ENCODE measurements at regions of chr2 and their contacts with region 1.

Region 1: DNA sequence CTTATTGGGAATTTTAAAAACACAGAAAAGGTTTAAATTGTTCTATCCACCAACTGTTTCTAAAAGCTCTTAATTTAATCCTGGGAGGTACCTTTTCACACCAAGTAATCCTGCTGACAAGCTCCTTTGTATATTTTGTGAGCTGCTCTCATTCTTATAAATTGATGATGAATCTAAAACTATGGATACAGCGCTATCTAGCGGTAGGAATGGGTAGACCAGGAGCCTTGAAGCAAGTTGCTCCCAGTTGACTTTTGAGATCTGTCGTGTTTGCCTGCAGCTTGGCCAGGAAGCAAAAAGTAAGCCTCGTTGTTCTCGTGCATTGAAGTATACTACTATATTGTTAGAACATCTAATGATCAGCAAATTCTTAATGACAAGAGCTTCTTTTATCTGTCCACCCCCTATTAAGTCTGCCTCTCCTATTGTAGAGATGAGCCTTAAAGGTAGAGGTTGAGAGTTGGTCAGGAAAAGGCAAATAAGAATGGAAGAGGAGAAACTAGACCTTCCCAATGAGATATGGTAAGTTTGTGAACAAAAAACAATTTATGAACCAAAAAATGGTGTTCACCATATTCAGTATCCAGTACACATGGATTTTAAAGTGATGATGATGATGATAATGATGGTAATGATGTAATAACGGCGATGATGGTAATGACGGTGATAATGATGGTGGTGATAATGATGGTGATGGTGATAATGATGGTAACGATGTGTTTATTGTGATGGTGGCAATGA is 212.0 kb upstream of the NCKAP5 start:
- DNase-seq: peak in 3 of 5 donors; percentile 32 to 45 (median 42)
- ATAC-seq: peak in 3 of 4 donors; percentile 46 to 74 (median 50)
- H3K4me3 ChIP-seq: no peak overlapping the region
- H3K27ac ChIP-seq: no peak overlapping the region
- H3K4me1 ChIP-seq: peaks cover 0 to 8% (median under 1%) of the 10 kb centered on the region in 12 donors
- H3K27me3 ChIP-seq: no peaks in the 10 kb centered on the region
- CTCF ChIP-seq: peak; percentile 57 to 87 (median 74)
- POLR2A ChIP-seq: no peak

Region 2: GRCh38 chr2:132547074-132547687 is 1233.1 kb before region 1 on chr2:
- intact Hi-C with region 1: loop called in 3 of 10 experiments (anchors 5 to 10 kb)
- DNase-seq: peak in 4 of 5 donors; percentile 48 to 74 (median 52)
- ATAC-seq: peak in 1 of 4 donors; percentile 51
- H3K4me3 ChIP-seq: no peak overlapping the region
- H3K27ac ChIP-seq: no peak overlapping the region
- H3K4me1 ChIP-seq: no peaks in the 10 kb centered on the region
- H3K27me3 ChIP-seq: peaks cover 0 to 8% (median 0%) of the 10 kb centered on the region in 9 donors
- CTCF ChIP-seq: peak; percentile 53 to 76 (median 64)
- POLR2A ChIP-seq: no peak

Region 3: DNA sequence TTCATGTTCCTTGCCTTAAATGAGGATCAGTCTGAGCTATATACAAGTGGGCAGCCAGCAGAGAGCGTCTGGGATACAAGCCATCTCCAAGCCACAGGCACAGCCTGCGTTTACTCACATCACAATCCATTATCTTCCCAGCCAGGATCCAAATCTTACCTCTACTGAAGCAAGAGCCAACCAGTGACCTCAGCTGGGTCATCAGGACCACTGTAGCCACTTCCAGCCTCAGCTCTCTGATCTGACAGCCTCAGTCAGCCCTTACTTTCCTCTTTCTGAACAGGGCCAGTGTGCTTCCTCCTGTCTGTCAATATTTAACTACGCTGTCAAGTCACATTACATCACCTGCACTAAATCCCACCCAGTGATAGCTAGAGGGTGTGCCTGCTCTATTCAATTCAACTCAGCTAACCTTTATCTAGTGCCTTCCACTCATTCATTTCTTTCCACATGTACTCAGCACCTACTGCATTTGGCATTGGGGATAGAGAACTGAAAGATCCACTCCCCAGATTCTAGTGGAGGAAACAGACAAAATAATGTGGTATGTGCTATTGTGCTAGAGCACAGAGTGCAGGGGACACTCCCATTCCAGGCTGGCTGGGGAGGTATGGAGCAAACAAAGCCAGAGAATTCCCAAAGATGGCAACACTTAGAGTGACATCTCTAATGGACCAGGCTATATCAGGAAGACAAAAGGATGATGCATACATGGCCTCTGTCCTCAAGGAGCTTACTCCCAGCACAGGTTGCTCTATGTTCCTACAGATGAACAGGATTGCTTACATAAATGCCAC is 358.6 kb before region 1 on chr2:
- intact Hi-C with region 1: loop called in 1 of 10 experiments (anchors 10 kb)
- DNase-seq: peak in 4 of 5 donors; percentile 23 to 58 (median 42)
- ATAC-seq: peak; percentile 93 to 96 (median 94)
- H3K4me3 ChIP-seq: no peak overlapping the region
- H3K27ac ChIP-seq: peak overlapping the region in 6 of 12 donors; percentile 13 to 58 (median 26)
- H3K4me1 ChIP-seq: peaks cover 0 to 17% (median 0%) of the 10 kb centered on the region in 12 donors
- H3K27me3 ChIP-seq: no peaks in the 10 kb centered on the region
- CTCF ChIP-seq: peak in 5 of 12 donors; percentile 5 to 31 (median 15)
- POLR2A ChIP-seq: no peak

Region 4: GRCh38 chr2:133561045-133561852 is 219.0 kb before region 1 on chr2:
- intact Hi-C with region 1: loop called in 8 of 10 experiments (anchors 2 to 10 kb)
- DNase-seq: no peak
- ATAC-seq: peak in 2 of 4 donors; percentile 58 to 62
- H3K4me3 ChIP-seq: no peak overlapping the region
- H3K27ac ChIP-seq: no peak overlapping the region
- H3K4me1 ChIP-seq: peaks cover 0 to 9% (median 2%) of the 10 kb centered on the region in 12 donors
- H3K27me3 ChIP-seq: no peaks in the 10 kb centered on the region
- CTCF ChIP-seq: peak; percentile 23 to 72 (median 62)
- POLR2A ChIP-seq: no peak

Region 5: DNA sequence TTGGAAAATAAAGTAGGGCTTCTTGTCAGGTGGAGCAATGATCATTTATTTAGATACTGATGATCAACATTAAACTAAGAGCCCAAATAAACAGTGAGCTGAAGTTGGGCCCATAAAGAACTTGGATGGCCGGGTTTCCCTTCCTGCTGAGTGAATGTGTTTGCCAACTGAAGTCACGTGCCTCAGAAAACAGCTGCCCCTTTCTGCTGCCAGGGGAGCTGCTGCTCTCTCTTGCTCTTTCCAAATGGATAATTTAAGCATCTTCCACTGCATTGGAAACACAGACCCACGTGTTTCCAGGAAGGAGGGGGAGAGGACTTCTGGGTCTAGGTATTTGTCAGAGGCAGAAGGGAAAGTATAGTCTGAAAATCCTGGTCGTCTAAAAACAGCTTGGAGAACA is 189.1 kb before region 1 on chr2:
- intact Hi-C with region 1: loop called in 1 of 10 experiments (anchors 10 kb)
- DNase-seq: peak in 4 of 5 donors; percentile 65 to 76 (median 70)
- ATAC-seq: peak; percentile 87 to 91 (median 88)
- H3K4me3 ChIP-seq: no peak overlapping the region
- H3K27ac ChIP-seq: peak overlapping the region in 5 of 12 donors; percentile 4 to 27 (median 14)
- H3K4me1 ChIP-seq: peaks cover 0 to 23% (median 6%) of the 10 kb centered on the region in 12 donors
- H3K27me3 ChIP-seq: no peaks in the 10 kb centered on the region
- CTCF ChIP-seq: peak in 3 of 12 donors; percentile 16 to 28 (median 26)
- POLR2A ChIP-seq: no peak

Region 6: DNA sequence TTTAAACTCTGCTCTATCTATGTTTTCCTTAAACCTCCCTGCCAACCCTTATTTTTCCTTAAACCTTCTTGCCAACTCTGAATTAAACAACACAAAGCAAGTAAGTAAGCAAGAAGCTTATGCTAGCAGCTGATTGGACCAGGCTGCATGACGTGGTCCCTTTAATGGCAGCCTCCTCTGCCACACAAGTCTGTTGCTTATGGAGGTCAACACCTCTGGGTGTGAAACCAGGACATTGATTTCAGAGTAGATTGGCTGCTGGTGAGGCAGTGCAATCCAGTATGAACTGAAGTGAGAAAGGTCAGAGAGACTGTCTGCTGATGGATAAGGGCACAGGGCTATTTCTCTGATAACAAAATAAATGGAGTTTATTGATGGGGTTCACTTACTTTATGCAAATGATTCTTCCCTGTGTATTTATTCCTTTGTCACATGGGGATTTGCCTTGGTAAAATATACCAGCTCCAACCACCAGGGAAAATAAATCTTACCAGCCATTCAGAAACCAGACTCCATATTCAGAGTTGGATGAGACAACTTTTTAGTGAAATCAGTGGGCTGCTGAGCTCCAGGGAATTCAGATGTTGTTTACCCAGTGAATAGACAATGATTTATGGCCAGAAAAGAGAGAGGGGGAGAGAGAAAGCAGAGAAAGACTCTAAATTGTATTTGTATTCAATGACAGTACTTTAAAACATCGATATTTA is 99.8 kb before region 1 on chr2:
- intact Hi-C with region 1: loop called in 3 of 10 experiments (anchors 5 kb)
- DNase-seq: no peak
- ATAC-seq: peak in 2 of 4 donors; percentile 19 to 29
- H3K4me3 ChIP-seq: no peak overlapping the region
- H3K27ac ChIP-seq: no peak overlapping the region
- H3K4me1 ChIP-seq: peaks cover 0 to 21% (median 8%) of the 10 kb centered on the region in 12 donors
- H3K27me3 ChIP-seq: no peaks in the 10 kb centered on the region
- CTCF ChIP-seq: no peak
- POLR2A ChIP-seq: no peak

Region 7: DNA sequence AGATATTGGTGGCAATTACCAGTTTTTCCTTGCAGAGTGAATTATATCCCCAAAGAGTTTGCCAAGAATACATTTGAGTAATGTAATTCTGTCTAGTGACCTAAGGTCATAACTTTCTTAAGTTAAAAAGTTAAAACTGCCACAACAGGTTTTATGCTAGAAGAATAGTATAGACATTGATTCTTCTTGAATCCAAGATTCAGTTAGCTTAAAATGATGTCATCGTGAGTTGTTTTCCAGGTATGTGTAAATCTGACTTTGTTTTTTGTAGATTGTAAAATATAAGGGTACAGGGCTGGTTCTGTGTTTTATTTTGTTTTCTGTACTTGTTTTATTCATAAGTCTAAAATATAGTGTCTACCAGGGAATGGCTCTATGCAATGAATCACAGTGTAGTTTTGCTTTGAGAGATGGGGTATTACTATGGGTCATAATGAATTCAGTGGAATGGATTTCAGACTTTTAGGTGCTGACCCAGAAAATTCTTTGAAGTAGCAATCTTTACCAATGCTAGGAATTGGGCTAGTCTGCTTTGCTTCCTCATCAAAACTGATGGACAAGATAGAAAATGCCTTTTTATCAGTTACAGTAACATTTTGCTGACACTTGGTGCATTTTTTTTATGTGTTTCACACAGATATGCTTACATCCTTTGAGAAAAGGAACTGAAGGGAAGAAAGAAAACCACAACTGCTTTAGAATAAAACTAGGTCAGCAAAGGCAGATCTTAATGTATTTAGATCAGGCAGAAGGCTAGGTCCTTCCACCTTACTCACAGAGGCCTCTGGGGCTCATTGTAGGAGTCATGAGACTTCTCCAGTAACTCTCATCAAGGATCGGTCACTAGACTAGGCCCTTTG is 452.8 kb after region 1 on chr2:
- intact Hi-C with region 1: no loop called
- DNase-seq: no peak
- ATAC-seq: peak in 1 of 4 donors; percentile 14
- H3K4me3 ChIP-seq: peak overlapping the region in 1 of 12 donors; percentile 10
- H3K27ac ChIP-seq: peak overlapping the region in 2 of 12 donors; percentile 15 to 74
- H3K4me1 ChIP-seq: peaks cover 0 to 58% (median 33%) of the 10 kb centered on the region in 12 donors
- H3K27me3 ChIP-seq: no peaks in the 10 kb centered on the region
- CTCF ChIP-seq: no peak
- POLR2A ChIP-seq: no peak